SK-N-SH (cell line): ENCODE measurements at regions of chr17 and their contacts with region 1.

Region 1: GRCh38 chr17:7989781-7990655 is 12.4 kb upstream of the GUCY2D start:
- DNase-seq: peak; percentile 93
- H3K4me3 ChIP-seq: peak overlapping the region; percentile 57 to 72
- H3K27ac ChIP-seq: peak overlapping the region in 1 of 2 experiments; percentile 47; a peak in 1 of 4 replicates
- H3K4me1 ChIP-seq: peaks cover 0 to 4% of the 10 kb centered on the region in 2 experiments; a peak in 1 of 4 replicates
- H3K27me3 ChIP-seq: no peaks in the 10 kb centered on the region
- CTCF ChIP-seq: peak; percentile 93
- EP300 ChIP-seq: no peak; a peak in 1 of 4 replicates
- RAD21 ChIP-seq: peak; percentile 59

Region 2: GRCh38 chr17:7803981-7804380 is 186.0 kb before region 1 on chr17:
- CTCF ChIA-PET with region 1: no interaction called
- POLR2A ChIA-PET with region 1: no interaction called
- DNase-seq: no peak
- H3K4me3 ChIP-seq: no peak overlapping the region
- H3K27ac ChIP-seq: no peak overlapping the region
- H3K4me1 ChIP-seq: no peaks in the 10 kb centered on the region
- H3K27me3 ChIP-seq: no peaks in the 10 kb centered on the region; the same call in 1 of the 2 replicates
- CTCF ChIP-seq: no peak
- EP300 ChIP-seq: no peak
- RAD21 ChIP-seq: no peak

Region 3: GRCh38 chr17:7834962-7835813 is 154.8 kb before region 1 on chr17:
- CTCF ChIA-PET with region 1: interaction called, 11 read pairs
- POLR2A ChIA-PET with region 1: no interaction called
- DNase-seq: peak; percentile 92
- H3K4me3 ChIP-seq: peak overlapping the region; percentile 90 to 97
- H3K27ac ChIP-seq: peak overlapping the region; percentile 98 to 99
- H3K4me1 ChIP-seq: peaks cover 21 to 27% of the 10 kb centered on the region in 2 experiments
- H3K27me3 ChIP-seq: peaks cover 7% of the 10 kb centered on the region; the same call in 1 of the 2 replicates
- CTCF ChIP-seq: peak; percentile 77
- EP300 ChIP-seq: no peak; a peak in 2 of 4 replicates
- RAD21 ChIP-seq: peak; percentile 75

Region 4: DNA sequence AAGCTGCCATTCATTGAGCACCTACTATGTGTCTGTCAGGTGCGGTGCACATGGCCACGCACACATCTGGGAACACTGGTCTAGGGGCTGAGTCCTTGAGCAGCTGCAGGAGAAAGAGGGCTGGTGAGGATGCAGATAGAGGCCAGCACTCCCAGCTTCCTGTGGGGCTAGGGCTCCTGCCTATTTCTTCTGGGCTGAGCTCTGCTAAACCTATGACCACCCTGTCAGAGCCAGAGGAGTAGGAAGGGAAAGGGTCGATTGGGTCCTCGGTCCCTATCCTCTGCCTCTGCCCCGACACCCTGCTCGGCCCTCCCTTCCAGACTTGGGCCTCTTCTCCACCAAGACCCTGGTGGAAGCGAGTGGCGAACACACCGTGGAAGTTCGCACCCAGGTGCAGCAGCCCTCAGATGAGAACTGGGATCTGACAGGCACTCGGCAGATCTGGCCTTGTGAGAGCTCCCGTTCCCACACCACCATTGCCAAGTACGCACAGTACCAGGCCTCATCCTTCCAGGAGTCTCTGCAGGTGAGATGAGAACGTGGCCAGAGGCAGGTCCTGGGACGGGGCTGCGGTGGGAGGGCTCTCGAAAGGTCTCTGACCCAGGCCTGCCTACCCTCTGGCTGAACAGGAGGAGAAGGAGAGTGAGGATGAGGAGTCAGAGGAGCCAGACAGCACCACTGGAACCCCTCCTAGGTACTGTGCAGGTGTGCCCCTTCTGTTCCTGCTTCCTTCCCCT is 139.1 kb before region 1 on chr17:
- CTCF ChIA-PET with region 1: no interaction called
- POLR2A ChIA-PET with region 1: no interaction called
- DNase-seq: no peak
- H3K4me3 ChIP-seq: no peak overlapping the region
- H3K27ac ChIP-seq: peak overlapping the region in 1 of 2 experiments; percentile 34; a peak in 1 of 4 replicates
- H3K4me1 ChIP-seq: peaks cover 8 to 20% of the 10 kb centered on the region in 2 experiments; a peak in 1 of 4 replicates
- H3K27me3 ChIP-seq: no peaks in the 10 kb centered on the region
- CTCF ChIP-seq: no peak
- EP300 ChIP-seq: no peak
- RAD21 ChIP-seq: no peak

Region 5: DNA sequence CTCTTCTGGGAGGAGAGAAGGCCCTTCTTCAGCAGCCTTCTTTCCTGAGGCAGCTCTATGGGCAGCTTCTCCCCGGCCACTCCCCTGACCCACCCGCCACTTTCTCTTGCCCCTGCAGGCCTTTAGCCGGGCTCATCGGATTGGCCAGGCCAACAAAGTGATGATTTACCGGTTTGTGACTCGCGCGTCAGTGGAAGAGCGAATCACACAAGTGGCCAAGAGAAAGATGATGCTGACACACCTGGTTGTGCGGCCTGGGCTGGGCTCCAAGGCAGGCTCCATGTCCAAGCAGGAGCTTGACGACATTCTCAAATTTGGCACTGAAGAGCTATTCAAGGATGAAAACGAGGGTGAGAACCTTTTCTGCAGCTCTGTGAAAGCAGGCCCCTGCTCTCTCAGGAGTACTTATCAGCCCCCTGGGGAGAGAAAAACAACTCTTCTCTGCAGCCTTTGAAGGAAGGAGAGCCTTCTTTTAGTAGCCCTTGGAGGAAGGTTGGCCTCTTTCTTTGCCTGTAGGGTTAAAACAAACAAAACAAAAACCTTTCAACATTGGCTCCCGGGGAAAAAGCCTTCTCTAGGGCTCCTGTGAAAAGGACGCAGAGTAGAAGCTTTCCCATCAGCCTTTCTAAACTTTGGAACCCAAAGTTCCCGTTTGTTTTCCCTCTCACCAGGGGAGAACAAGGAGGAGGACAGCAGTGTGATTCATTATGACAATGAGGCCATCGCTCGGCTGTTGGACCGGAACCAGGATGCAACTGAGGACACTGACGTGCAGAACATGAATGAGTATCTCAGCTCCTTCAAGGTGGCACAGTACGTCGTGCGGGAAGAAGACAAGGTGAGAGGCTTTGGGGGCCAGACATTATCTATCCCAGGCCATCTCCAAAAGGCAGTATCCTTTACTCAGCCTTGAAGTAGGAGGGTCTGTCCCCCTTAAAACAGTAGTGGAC is 86.6 kb before region 1 on chr17:
- CTCF ChIA-PET with region 1: interaction called, 15 read pairs
- POLR2A ChIA-PET with region 1: no interaction called
- DNase-seq: no peak
- H3K4me3 ChIP-seq: no peak overlapping the region
- H3K27ac ChIP-seq: no peak overlapping the region
- H3K4me1 ChIP-seq: no peaks in the 10 kb centered on the region
- H3K27me3 ChIP-seq: no peaks in the 10 kb centered on the region
- CTCF ChIP-seq: no peak
- EP300 ChIP-seq: no peak
- RAD21 ChIP-seq: no peak

Region 6: GRCh38 chr17:7931709-7932482 is 58.1 kb before region 1 on chr17 and contains the starts of genes CNTROB and TRAPPC1:
- CTCF ChIA-PET with region 1: interaction called, 61 read pairs
- POLR2A ChIA-PET with region 1: interaction called, 3 read pairs
- DNase-seq: peak; percentile 98
- H3K4me3 ChIP-seq: peak within 1 kb of the TSS; percentile 99 to 100
- H3K27ac ChIP-seq: peak within 1 kb of the TSS; percentile 75 to 87
- H3K4me1 ChIP-seq: peaks cover 21 to 38% of the 10 kb centered on the region in 2 experiments; a peak in 3 of 4 replicates
- H3K27me3 ChIP-seq: no peaks in the 10 kb centered on the region
- CTCF ChIP-seq: no peak
- EP300 ChIP-seq: no peak
- RAD21 ChIP-seq: no peak
- polyA plus RNA-seq, gene CNTROB: 26.3 and 27.4 TPM in 2 replicates
- polyA plus RNA-seq, gene TRAPPC1: 390 and 555 TPM in 2 replicates

Region 7: DNA sequence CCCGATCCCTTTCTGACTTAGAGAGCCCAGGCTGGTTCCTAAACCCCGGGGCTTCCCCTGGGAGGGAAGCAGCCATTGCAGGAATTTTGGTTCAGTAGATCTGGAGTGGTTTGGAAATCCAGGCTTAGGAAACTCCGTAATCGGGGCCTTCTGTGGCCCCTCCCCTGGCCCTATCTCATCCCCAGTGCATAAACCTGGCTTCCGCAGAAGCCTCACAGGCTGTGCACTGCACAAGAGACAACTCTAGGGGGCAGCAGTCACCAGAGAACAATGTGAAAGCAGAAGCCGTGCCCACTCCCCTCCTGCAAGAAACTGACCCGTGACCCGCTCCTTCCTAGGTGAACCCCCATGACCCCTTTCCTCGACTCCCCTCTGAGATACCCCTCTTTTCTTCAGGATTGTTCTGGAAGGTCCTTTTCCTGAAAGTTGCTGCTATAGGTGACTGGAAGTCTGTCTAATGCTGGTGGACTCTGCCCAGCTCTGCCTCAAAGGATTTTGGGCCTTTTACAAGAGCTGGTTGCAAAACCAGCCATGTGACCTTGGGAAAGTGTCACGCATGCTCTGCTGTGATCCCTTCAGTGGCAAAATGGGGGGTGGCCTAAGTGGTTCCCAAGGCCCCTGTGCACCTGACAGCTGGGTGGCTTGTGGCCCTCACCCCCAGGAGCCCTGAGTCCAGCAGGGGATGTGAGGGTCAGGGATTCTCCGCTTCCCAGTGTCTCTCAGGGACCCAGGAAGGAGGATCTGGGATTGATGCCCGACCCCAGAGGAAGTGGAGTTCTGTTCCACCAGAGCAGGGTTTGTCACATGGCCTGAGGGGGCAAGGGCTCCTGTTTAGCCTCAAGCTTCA is 26.8 kb after region 1 on chr17:
- CTCF ChIA-PET with region 1: interaction called, 53 read pairs
- POLR2A ChIA-PET with region 1: no interaction called
- DNase-seq: peak; percentile 82
- H3K4me3 ChIP-seq: peak overlapping the region; percentile 45 to 53
- H3K27ac ChIP-seq: no peak overlapping the region
- H3K4me1 ChIP-seq: peaks cover 0 to 15% of the 10 kb centered on the region in 2 experiments; a peak in 1 of 4 replicates
- H3K27me3 ChIP-seq: no peaks in the 10 kb centered on the region
- CTCF ChIP-seq: peak; percentile 72
- EP300 ChIP-seq: no peak
- RAD21 ChIP-seq: peak; percentile 76

Region 8: GRCh38 chr17:8073627-8074484 is 83.8 kb after region 1 on chr17:
- CTCF ChIA-PET with region 1: interaction called, 10 read pairs
- POLR2A ChIA-PET with region 1: no interaction called
- DNase-seq: peak; percentile 89
- H3K4me3 ChIP-seq: peak overlapping the region in 1 of 2 experiments; percentile 26; a peak in 1 of 4 replicates
- H3K27ac ChIP-seq: no peak overlapping the region
- H3K4me1 ChIP-seq: peaks cover 0 to 8% of the 10 kb centered on the region in 2 experiments; a peak in 1 of 4 replicates
- H3K27me3 ChIP-seq: peaks cover 64% of the 10 kb centered on the region
- CTCF ChIP-seq: peak; percentile 89
- EP300 ChIP-seq: no peak
- RAD21 ChIP-seq: peak; percentile 41

Region 9: GRCh38 chr17:8131844-8132441 is 141.9 kb after region 1 on chr17:
- CTCF ChIA-PET with region 1: no interaction called
- POLR2A ChIA-PET with region 1: no interaction called
- DNase-seq: no peak
- H3K4me3 ChIP-seq: no peak overlapping the region
- H3K27ac ChIP-seq: no peak overlapping the region
- H3K4me1 ChIP-seq: peaks cover 0 to 2% of the 10 kb centered on the region in 2 experiments; a peak in 1 of 4 replicates
- H3K27me3 ChIP-seq: no peaks in the 10 kb centered on the region; the same call in 1 of the 2 replicates
- CTCF ChIP-seq: no peak
- EP300 ChIP-seq: no peak
- RAD21 ChIP-seq: no peak

Region 10: DNA sequence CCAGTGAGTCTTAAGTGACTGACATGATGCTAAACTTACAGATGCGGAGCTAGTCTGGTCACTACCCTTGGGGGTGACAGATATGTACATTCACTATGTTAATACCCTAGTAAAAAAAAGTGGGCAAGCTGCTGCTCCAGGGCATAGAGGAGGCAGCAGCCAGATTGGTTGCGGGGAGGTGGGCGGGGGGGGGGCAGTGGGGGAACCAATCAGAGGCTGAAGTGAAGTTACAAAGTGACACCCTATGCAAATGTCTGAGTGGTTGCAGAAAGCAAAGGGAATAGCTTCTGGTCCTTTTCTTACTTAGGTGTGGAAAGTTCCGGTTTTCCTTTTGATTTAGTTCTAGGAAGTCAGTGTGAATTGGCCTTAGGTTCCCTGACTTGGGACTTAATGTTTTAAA is 457.8 kb after region 1 on chr17:
- CTCF ChIA-PET with region 1: no interaction called
- POLR2A ChIA-PET with region 1: no interaction called
- DNase-seq: no peak
- H3K4me3 ChIP-seq: no peak overlapping the region
- H3K27ac ChIP-seq: no peak overlapping the region
- H3K4me1 ChIP-seq: no peaks in the 10 kb centered on the region; a peak in 1 of 4 replicates
- H3K27me3 ChIP-seq: no peaks in the 10 kb centered on the region
- CTCF ChIP-seq: no peak
- EP300 ChIP-seq: no peak
- RAD21 ChIP-seq: no peak